Endothelial cell of umbilical vein (primary cell): ENCODE measurements at regions of chr2 and their contacts with region 1.

Region 1: GRCh38 chr2:144583741-144584453 is 64.0 kb upstream of the ZEB2 start:
- DNase-seq: peak; percentile 43
- H3K4me3 ChIP-seq: no peak overlapping the region
- H3K27ac ChIP-seq: no peak overlapping the region
- H3K4me1 ChIP-seq: peaks cover 37% of the 10 kb centered on the region
- H3K27me3 ChIP-seq: no peaks in the 10 kb centered on the region
- CTCF ChIP-seq: no peak
- POLR2A ChIP-seq: no peak

Region 2: DNA sequence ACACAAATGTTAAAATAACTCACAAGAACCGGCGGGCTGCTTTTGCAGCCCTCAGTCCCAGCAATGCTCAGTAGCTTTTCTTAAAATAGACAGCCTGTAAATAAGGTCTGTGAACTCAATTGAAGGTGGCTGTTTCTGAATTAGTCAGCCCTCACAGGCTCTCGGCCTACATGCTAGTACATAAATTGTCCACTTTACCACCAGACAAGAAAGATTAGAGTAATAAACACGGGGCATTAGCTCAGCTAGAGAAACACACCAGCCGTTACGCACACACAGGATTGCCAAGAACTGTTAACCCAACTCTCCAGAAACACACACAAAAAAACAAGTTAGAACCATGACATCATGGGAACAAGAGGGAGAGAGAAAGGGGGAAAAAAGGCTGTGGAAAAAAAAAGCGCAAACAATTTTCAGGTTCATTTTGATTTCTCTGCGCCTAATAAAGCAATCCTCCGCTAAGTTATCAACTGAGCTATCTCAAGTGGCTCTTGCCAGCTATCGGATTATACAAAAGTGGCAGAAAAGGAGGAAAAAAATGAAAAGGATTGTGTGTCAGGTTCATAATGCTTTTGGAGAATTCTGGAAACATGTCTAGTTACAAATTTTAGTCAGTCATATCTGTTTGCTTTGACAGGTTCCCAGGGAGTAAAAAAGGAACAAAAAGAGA is 153.0 kb before region 1 on chr2:
- CTCF ChIA-PET with region 1: no interaction called
- POLR2A ChIA-PET with region 1: no interaction called
- dilution Hi-C with region 1: no loop called
- intact Hi-C with region 1: no loop called
- DNase-seq: peak; percentile 51
- H3K4me3 ChIP-seq: no peak overlapping the region
- H3K27ac ChIP-seq: no peak overlapping the region
- H3K4me1 ChIP-seq: peaks cover 16% of the 10 kb centered on the region
- H3K27me3 ChIP-seq: no peaks in the 10 kb centered on the region
- CTCF ChIP-seq: no peak
- POLR2A ChIP-seq: no peak

Region 3: GRCh38 chr2:144524118-144524957 is 59.6 kb before region 1 on chr2:
- CTCF ChIA-PET with region 1: interaction called, 3 read pairs
- POLR2A ChIA-PET with region 1: no interaction called
- dilution Hi-C with region 1: no loop called
- intact Hi-C with region 1: loop called (anchors 2 kb)
- DNase-seq: no peak
- H3K4me3 ChIP-seq: peak overlapping the region; percentile 45 to 91 (median 89)
- H3K27ac ChIP-seq: peak overlapping the region; percentile 53
- H3K4me1 ChIP-seq: peaks cover 30% of the 10 kb centered on the region
- H3K27me3 ChIP-seq: no peaks in the 10 kb centered on the region
- CTCF ChIP-seq: no peak
- POLR2A ChIP-seq: no peak

Region 4: DNA sequence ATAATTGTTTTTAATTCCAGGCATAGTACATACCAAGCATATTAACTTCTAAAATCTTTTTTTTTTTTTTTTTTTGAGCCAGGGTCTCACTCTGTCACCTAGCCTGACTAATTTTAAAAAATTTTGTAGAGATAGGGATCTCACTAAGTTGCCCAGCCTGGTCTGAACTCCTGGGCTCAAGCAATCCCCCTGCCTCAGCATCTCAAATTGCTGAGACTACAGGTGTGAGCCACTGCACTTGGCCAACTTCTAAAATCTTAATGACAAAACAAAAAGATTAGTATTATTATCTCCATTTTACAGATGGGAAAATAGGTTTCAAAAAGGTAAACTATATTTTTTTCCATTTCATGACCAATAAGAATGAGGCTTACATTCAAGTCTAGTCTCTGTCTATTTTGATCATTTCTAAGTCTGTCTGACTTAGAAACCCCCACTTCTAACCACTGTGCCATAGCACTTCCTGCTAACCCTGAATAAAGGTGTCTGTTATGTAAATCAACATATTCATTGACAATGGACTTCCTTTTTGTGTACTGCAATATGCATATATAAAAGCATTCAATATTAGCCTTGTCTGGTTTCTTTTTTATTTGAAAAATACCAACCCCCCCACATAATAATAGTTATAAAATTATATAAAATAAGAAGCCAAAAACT is 35.2 kb before region 1 on chr2:
- CTCF ChIA-PET with region 1: no interaction called
- POLR2A ChIA-PET with region 1: no interaction called
- dilution Hi-C with region 1: no loop called
- intact Hi-C with region 1: no loop called
- DNase-seq: no peak
- H3K4me3 ChIP-seq: no peak overlapping the region
- H3K27ac ChIP-seq: no peak overlapping the region
- H3K4me1 ChIP-seq: peaks cover 5% of the 10 kb centered on the region
- H3K27me3 ChIP-seq: no peaks in the 10 kb centered on the region
- CTCF ChIP-seq: no peak
- POLR2A ChIP-seq: no peak